ENCODE measurements at regions of chr14 and their contacts with region 1.

Region 1: DNA sequence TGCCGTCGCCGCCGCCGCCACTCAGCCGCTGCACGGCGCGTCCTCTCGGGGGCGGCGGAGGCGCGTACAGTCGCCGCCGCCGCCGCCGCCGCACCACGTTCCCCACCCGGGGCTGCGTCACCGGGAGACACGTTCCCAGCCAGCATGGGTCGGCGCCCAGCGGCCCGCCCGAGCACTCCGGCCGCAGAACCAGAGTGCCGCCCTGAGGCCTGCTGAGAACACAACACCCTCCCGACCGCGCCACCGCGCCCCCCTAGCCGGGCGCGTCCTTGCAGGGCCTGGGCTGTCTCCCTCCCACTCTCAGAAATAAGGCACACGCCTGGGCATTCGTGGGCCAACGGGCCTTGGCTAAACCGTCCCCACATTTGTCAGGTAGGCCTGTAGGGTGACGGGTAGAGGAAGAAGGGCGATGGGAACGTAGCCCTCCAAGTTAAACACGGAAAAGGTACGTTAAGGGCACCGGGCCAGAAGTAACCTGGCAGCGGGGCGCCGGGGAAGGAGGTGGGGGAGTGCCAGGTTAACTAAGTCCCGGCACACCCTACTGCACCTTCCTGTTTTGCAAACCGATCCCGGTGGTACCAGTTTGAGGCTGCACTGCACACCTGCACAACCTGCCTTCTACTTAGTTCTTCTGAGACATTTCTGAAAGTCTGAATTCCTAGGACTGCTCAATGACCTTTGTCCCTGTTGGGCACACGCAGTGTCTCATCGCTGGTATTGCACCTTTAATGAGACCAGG is at the start of gene MAP4K5:
- DNase-seq: peak; percentile 93

Region 2: GRCh38 chr14:50260511-50260910 is 272.2 kb before region 1 on chr14:
- in situ Hi-C with region 1: no loop called
- DNase-seq: peak; percentile 49

Region 3: DNA sequence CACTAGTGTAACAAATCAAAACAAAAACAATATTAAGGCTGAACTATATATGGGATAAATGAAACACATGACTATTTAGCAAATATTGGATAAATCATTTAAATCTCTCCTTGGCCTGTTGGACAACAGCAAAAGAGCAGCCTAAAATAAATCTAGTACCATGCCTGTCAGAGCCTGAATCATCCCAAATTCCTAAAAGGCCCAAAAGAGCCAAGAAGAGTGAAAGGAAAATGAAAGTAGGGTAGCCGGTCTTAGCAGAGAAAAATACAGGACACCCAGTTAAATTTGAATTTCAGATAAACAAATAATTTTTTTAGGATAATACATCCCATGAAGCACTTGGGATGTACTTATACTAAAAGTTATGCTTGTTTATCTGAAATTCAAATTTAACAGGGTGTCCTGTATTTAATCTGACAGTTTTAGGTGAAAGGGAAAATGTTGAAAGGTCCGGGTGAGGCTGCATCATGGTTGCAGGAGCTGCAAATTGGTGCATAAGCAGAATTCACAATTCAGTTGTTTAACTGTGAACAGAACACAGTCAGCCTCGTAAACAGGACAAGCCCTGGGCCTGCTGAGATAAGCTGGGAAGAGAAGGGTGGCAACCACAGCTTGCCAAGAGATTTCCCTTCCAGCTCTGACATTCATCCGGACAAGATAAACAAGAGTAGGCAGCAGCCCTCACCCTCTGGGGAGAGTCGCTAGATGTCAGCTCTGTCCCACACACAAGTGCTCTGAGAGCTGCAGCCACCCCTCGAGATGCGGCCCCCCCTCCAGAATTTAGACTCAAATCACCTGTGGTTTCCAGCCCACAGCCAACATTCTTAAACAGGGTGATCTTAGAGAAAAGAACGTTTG is 190.2 kb before region 1 on chr14:
- in situ Hi-C with region 1: loop called (anchors 25 kb)
- DNase-seq: peak; percentile 83

Region 4: DNA sequence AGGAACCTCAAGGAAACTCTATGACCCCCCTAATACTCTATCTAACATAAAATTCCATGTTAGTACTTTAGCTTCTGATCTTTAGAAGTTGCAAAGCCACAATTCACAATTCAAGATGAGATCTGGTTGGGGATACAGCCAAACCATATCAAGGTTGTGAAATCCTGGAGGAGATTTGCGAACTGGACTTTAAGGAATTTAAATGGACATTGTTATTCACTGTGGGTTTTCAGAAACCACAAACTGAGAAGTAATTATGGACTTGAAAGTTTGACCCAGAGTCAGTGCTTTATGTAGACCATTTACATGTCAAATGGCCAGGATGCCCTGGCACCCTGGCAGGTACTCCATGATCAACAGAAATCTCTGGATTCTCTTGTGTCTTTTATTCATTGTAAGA is 121.8 kb before region 1 on chr14:
- in situ Hi-C with region 1: no loop called
- DNase-seq: no peak

Region 5: GRCh38 chr14:50619556-50620141 is 87.0 kb after region 1 on chr14:
- in situ Hi-C with region 1: no loop called
- DNase-seq: peak; percentile 55